ENCODE measurements at regions of chr1 and their contacts with region 1.

Region 1: GRCh38 chr1:93814059-93814794 is 64.8 kb downstream of the DNTTIP2 start:
- DNase-seq: peak; percentile 42 to 75 (median 50)
- ATAC-seq: peak; percentile 89
- H3K4me3 ChIP-seq: no peak overlapping the region
- H3K27ac ChIP-seq: no peak overlapping the region
- H3K4me1 ChIP-seq: peaks cover 0 to 15% of the 10 kb centered on the region in 2 experiments; a peak in 3 of 5 replicates
- H3K27me3 ChIP-seq: peaks cover 12 to 15% of the 10 kb centered on the region in 2 experiments; a peak in 4 of 5 replicates
- CTCF ChIP-seq: peak; percentile 88 to 96 (median 91)
- EP300 ChIP-seq: no peak
- POLR2A ChIP-seq: no peak
- RAD21 ChIP-seq: peak; percentile 99 to 100

Region 2: GRCh38 chr1:93447516-93448291 is 366.5 kb before region 1 on chr1 and contains the start of gene FNBP1L:
- CTCF ChIA-PET with region 1: interaction called, 4 read pairs
- POLR2A ChIA-PET with region 1: no interaction called
- in situ Hi-C with region 1: loop called (anchors 10 kb)
- intact Hi-C with region 1: no loop called
- DNase-seq: peak; percentile 90 to 92 (median 92)
- ATAC-seq: peak; percentile 96
- H3K4me3 ChIP-seq: peak within 1 kb of the TSS; percentile 89
- H3K27ac ChIP-seq: peak within 1 kb of the TSS; percentile 77
- H3K4me1 ChIP-seq: peaks cover 14 to 18% of the 10 kb centered on the region in 2 experiments; a peak in 4 of 5 replicates
- H3K27me3 ChIP-seq: 0 out of 5 replicates have a peak, but pooled peaks cover 0 to 4% of the 10 kb centered on the region in 2 experiments
- CTCF ChIP-seq: no peak
- EP300 ChIP-seq: no peak
- POLR2A ChIP-seq: peak; percentile 65
- RAD21 ChIP-seq: no peak
- polyA plus RNA-seq, gene FNBP1L: 1.4 to 2.3 TPM

Region 3: GRCh38 chr1:93617670-93618499 is 196.3 kb before region 1 on chr1:
- CTCF ChIA-PET with region 1: no interaction called
- POLR2A ChIA-PET with region 1: no interaction called
- in situ Hi-C with region 1: no loop called
- intact Hi-C with region 1: no loop called
- DNase-seq: no peak
- ATAC-seq: no peak
- H3K4me3 ChIP-seq: no peak overlapping the region
- H3K27ac ChIP-seq: no peak overlapping the region
- H3K4me1 ChIP-seq: peaks cover 0 to 6% of the 10 kb centered on the region in 2 experiments; a peak in 3 of 5 replicates
- H3K27me3 ChIP-seq: no peaks in the 10 kb centered on the region
- CTCF ChIP-seq: no peak
- EP300 ChIP-seq: no peak
- POLR2A ChIP-seq: no peak
- RAD21 ChIP-seq: no peak

Region 4: GRCh38 chr1:93629099-93630059 is 184.8 kb before region 1 on chr1:
- CTCF ChIA-PET with region 1: interaction called, 41 read pairs
- POLR2A ChIA-PET with region 1: interaction called, 6 read pairs
- in situ Hi-C with region 1: loop called (anchors 5 kb)
- intact Hi-C with region 1: loop called (anchors 1 kb)
- DNase-seq: peak; percentile 48 to 71 (median 52)
- ATAC-seq: peak; percentile 83
- H3K4me3 ChIP-seq: no peak overlapping the region
- H3K27ac ChIP-seq: no peak overlapping the region
- H3K4me1 ChIP-seq: no peaks in the 10 kb centered on the region
- H3K27me3 ChIP-seq: no peaks in the 10 kb centered on the region
- CTCF ChIP-seq: peak; percentile 70 to 95 (median 74)
- EP300 ChIP-seq: no peak
- POLR2A ChIP-seq: no peak
- RAD21 ChIP-seq: peak; percentile 99

Region 5: GRCh38 chr1:93734999-93735398 is 79.2 kb before region 1 on chr1:
- CTCF ChIA-PET with region 1: no interaction called
- POLR2A ChIA-PET with region 1: no interaction called
- in situ Hi-C with region 1: no loop called
- intact Hi-C with region 1: loop called (anchors 5 kb)
- DNase-seq: peak; percentile 14 to 25 (median 17)
- ATAC-seq: peak; percentile 59
- H3K4me3 ChIP-seq: no peak overlapping the region
- H3K27ac ChIP-seq: no peak overlapping the region
- H3K4me1 ChIP-seq: no peaks in the 10 kb centered on the region
- H3K27me3 ChIP-seq: peaks cover 28 to 60% of the 10 kb centered on the region in 2 experiments; a peak in 4 of 5 replicates
- CTCF ChIP-seq: peak; percentile 49 to 53 (median 51)
- EP300 ChIP-seq: no peak
- POLR2A ChIP-seq: no peak
- RAD21 ChIP-seq: peak in 1 of 2 experiments; percentile 43; a peak in 2 of 4 replicates

Region 6: GRCh38 chr1:93846211-93846991 is 32.2 kb after region 1 on chr1:
- CTCF ChIA-PET with region 1: no interaction called
- POLR2A ChIA-PET with region 1: interaction called, 5 read pairs
- in situ Hi-C with region 1: no loop called
- intact Hi-C with region 1: loop called (anchors 2 kb)
- DNase-seq: peak; percentile 80 to 90 (median 82)
- ATAC-seq: peak; percentile 84
- H3K4me3 ChIP-seq: peak overlapping the region; percentile 87
- H3K27ac ChIP-seq: peak overlapping the region; percentile 87
- H3K4me1 ChIP-seq: peaks cover 17 to 21% of the 10 kb centered on the region in 2 experiments; a peak in 4 of 5 replicates
- H3K27me3 ChIP-seq: no peaks in the 10 kb centered on the region
- CTCF ChIP-seq: peak; percentile 31 to 51 (median 40); a peak in 5 of 6 replicates
- EP300 ChIP-seq: no peak
- POLR2A ChIP-seq: peak; percentile 82
- RAD21 ChIP-seq: no peak

Measured in K562 (cell line).